ENCODE measurements at regions of chr3 and their contacts with region 1.

Region 1: DNA sequence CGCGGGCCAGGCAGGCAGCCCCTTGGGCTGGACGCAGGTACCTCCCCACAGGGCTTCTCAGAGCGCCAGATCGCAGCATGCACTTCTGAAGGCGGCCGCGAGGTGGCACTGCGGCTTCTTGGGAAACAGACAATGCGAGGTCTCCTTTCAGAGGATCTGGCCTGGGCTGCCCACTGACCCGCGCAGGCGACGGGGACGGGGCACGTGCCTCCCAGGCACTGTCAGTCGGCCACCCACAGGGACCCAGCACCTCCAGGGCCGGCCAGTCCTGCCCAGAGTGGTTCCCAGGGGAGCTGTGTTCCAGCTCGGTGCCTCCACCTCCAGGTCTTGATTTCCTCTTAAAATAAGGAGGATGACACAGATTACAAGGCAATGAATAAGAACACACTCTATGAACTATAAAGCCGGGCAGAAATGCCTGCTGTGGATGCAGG is 24.4 kb upstream of the TXNRD3 start:
- DNase-seq: peak; percentile 80
- H3K4me3 Mint-ChIP-seq: no peak overlapping the region
- H3K27ac Mint-ChIP-seq: no peak overlapping the region
- H3K4me1 Mint-ChIP-seq: no peaks in the 10 kb centered on the region
- H3K27me3 Mint-ChIP-seq: peaks cover 17% of the 10 kb centered on the region
- CTCF ChIP-seq: peak; percentile 98

Region 2: DNA sequence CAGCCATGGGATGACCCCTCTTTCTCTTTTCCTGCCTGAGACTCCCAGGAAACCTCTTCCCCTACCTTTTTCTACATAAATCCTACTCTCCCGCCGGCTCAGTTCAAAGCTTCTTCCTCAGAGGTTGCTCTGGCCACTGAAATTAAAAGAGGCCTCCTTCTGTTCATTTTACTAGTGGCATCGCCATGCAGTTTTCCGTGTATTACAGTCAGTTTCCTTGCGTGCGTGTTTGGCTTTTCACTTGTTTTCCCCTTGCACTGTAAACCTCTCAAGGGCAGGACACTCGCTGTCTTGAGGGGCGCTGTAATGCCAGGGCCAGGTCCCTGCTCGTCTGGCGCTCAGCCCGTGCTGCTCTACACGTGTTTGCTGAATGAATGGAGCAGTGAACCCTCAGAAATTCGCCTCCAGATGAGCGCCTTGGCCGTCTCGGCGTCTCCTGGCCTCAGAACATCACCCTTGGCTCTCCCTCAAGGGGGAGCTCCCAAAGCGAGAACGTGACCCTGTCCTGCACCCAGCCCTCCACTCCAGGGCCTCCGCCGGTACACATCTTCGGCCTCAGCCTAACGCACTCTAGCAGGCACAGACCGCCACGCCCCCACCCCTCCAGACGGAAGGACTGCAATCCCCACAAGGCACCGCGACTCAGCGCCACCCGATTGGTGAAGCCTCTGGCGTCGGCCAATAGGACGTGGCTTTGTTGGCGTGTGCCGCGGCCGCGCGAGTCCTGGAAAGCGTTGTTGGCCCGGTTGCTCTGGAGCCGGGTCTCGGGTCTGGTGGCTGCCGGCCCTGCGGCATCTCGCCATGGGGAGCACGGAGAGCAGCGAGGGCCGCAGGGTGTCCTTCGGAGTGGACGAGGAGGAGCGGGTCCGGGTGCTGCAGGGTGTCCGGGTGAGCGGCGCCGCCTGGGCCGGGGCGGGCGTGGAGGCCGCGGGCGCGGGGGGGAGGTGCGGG is 24.5 kb after region 1 on chr3 and contains the start of gene CHCHD6:
- CTCF ChIA-PET with region 1: interaction called, 15 read pairs
- POLR2A ChIA-PET with region 1: interaction called, 5 read pairs
- intact Hi-C with region 1: no loop called
- DNase-seq: peak; percentile 95
- H3K4me3 Mint-ChIP-seq: peak within 1 kb of the TSS; percentile 97
- H3K27ac Mint-ChIP-seq: peak within 1 kb of the TSS; percentile 95
- H3K4me1 Mint-ChIP-seq: peaks cover 21% of the 10 kb centered on the region
- H3K27me3 Mint-ChIP-seq: no peaks in the 10 kb centered on the region
- CTCF ChIP-seq: peak; percentile 16
- total RNA-seq, gene CHCHD6: 28.7 and 29.6 TPM in 2 replicates

Region 3: GRCh38 chr3:126982471-126983175 is 303.3 kb after region 1 on chr3 and contains the start of gene PLXNA1:
- CTCF ChIA-PET with region 1: interaction called, 7 read pairs
- POLR2A ChIA-PET with region 1: no interaction called
- intact Hi-C with region 1: loop called (anchors 1 kb)
- DNase-seq: peak; percentile 83
- H3K4me3 Mint-ChIP-seq: peak within 1 kb of the TSS; percentile 69
- H3K27ac Mint-ChIP-seq: no peak within 1 kb of the TSS
- H3K4me1 Mint-ChIP-seq: peaks cover 22% of the 10 kb centered on the region
- H3K27me3 Mint-ChIP-seq: no peaks in the 10 kb centered on the region
- CTCF ChIP-seq: peak; percentile 93
- total RNA-seq, gene PLXNA1: 42.1 and 48.4 TPM in 2 replicates

Region 4: GRCh38 chr3:127473244-127474024 is 794.1 kb after region 1 on chr3:
- CTCF ChIA-PET with region 1: interaction called, 10 read pairs
- POLR2A ChIA-PET with region 1: interaction called, 3 read pairs
- intact Hi-C with region 1: no loop called
- DNase-seq: peak; percentile 41
- H3K4me3 Mint-ChIP-seq: no peak overlapping the region
- H3K27ac Mint-ChIP-seq: no peak overlapping the region
- H3K4me1 Mint-ChIP-seq: no peaks in the 10 kb centered on the region
- H3K27me3 Mint-ChIP-seq: peaks cover 17% of the 10 kb centered on the region
- CTCF ChIP-seq: peak; percentile 37

Measured in MCF 10A (cell line).